Esophagus muscularis mucosa (tissue), 4 donors: ENCODE measurements at regions of chr7 and their contacts with region 1.

Region 1: DNA sequence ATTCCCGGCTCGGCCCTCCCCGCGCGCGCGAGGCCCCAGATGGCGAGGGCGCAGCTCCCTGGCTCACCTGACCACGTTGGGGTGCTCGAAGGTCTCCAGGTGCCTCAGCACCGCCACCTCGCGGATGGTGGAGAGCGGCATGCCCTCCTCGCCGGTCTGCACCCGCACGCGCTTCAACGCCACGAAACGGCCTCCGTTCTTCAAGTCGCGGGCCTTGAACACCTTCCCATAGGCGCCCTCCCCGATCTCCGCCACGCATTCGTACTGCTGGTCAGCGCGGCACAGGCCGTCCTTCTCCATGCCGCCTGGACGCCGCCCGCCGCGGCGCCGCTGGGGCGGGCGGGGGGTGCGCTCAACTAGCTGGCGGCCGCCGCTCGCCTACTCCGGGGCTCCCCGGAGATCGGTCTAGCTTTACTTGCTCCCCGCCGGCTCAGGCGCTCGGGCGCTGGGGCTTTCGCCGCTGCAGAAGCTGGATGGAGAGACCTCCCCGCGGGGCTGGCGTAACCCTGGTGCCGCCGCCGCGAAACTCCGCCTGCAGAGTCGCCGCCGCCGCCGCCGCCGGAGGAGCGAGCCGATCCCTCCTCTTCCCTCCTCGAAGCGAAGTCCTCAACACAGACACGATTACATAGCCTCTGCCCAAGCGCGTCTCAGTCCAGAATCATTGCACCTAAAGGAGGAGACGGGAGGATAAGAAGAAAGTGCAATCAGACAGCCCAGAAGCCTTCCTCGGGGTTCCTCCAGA is 3.2 kb downstream of the CDK6 start:
- DNase-seq: peak; percentile 94
- H3K4me3 ChIP-seq: peak overlapping the region; percentile 69 to 94 (median 77)
- H3K27ac ChIP-seq: peak overlapping the region; percentile 88 to 96 (median 89)
- H3K4me1 ChIP-seq: peaks cover 42 to 55% (median 51%) of the 10 kb centered on the region in 4 donors
- H3K27me3 ChIP-seq: no peaks in the 10 kb centered on the region
- CTCF ChIP-seq: peak; percentile 82 to 93 (median 91)
- EP300 ChIP-seq: no peak
- POLR2A ChIP-seq: no peak

Region 2: GRCh38 chr7:92621026-92621540 is 212.1 kb before region 1 on chr7:
- intact Hi-C with region 1: loop called (anchors 2 kb)
- DNase-seq: no peak
- H3K4me3 ChIP-seq: no peak overlapping the region
- H3K27ac ChIP-seq: peak overlapping the region; percentile 46 to 69 (median 57)
- H3K4me1 ChIP-seq: peaks cover 13 to 27% (median 24%) of the 10 kb centered on the region in 4 donors
- H3K27me3 ChIP-seq: no peaks in the 10 kb centered on the region
- CTCF ChIP-seq: peak; percentile 75 to 81 (median 80)
- EP300 ChIP-seq: no peak
- POLR2A ChIP-seq: no peak

Region 3: GRCh38 chr7:92691578-92691977 is 141.6 kb before region 1 on chr7:
- intact Hi-C with region 1: loop called (anchors 2 kb)
- DNase-seq: no peak
- H3K4me3 ChIP-seq: no peak overlapping the region
- H3K27ac ChIP-seq: no peak overlapping the region
- H3K4me1 ChIP-seq: peaks cover 4 to 39% (median 26%) of the 10 kb centered on the region in 4 donors
- H3K27me3 ChIP-seq: no peaks in the 10 kb centered on the region
- CTCF ChIP-seq: peak; percentile 42 to 59 (median 59)
- EP300 ChIP-seq: no peak
- POLR2A ChIP-seq: no peak

Region 4: DNA sequence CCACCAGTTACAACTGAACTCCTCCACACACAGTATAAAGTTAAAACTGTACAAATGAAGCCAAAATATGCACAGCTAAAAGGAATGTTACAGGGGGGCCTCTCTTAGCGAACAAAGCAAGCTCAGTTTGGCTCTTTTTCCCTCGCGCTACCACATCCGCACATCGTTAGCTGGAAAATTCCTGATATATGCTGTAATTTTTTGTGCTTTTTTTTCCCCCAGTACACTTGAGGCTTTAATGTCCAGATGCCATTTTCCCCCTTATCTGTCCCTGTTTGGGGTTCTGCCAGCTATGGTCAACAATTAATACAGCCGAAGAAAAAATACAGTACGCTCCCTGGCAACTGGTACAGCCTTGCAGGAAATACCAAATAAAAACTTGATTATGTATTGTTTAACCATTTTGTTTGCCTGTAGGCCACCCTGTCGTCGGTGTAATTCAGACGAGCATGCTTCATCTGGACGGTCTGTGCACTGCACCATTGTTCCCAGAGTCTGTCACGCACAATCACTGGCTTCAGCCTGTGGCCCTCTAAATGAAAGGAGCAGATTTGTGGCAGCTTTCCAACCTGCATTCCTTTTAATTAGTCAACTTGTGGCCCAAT is 134.9 kb before region 1 on chr7:
- intact Hi-C with region 1: loop called (anchors 2 kb)
- DNase-seq: no peak
- H3K4me3 ChIP-seq: peak overlapping the region; percentile 19 to 32 (median 26)
- H3K27ac ChIP-seq: peak overlapping the region; percentile 50 to 82 (median 80)
- H3K4me1 ChIP-seq: peaks cover 24 to 55% (median 51%) of the 10 kb centered on the region in 4 donors
- H3K27me3 ChIP-seq: no peaks in the 10 kb centered on the region
- CTCF ChIP-seq: peak in 1 of 3 experiments; percentile 33
- EP300 ChIP-seq: no peak
- POLR2A ChIP-seq: no peak

Region 5: DNA sequence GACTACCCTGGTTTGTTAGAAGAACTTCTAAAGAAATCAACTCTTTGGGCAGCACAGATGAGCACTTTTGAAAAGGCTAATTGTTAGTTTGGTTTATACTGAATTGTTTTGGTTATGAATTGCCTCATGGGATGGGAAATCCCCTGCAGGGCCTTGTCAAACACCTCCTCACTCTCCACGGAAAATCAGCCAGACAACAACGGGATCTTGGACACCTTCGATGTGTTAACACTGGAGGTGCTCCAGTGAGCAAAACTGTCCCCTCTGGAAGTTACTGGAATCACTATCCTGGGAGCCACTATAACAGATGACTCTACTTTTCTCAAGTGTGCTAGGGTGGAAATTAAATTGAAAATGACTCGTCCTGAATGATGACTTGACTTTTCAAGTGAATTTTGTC is 35.5 kb before region 1 on chr7:
- intact Hi-C with region 1: loop called (anchors 5 kb)
- DNase-seq: no peak
- H3K4me3 ChIP-seq: no peak overlapping the region
- H3K27ac ChIP-seq: peak overlapping the region; percentile 38 to 71 (median 60)
- H3K4me1 ChIP-seq: peaks cover 55 to 79% (median 68%) of the 10 kb centered on the region in 4 donors
- H3K27me3 ChIP-seq: no peaks in the 10 kb centered on the region
- CTCF ChIP-seq: peak in 2 of 3 experiments; percentile 6 to 42
- EP300 ChIP-seq: no peak
- POLR2A ChIP-seq: no peak